ENCODE measurements at regions of chr7 and their contacts with region 1.

Region 1: GRCh38 chr7:128387216-128388144 is 22.3 kb downstream of the IMPDH1 start:
- DNase-seq: no peak
- ATAC-seq: peak; percentile 93
- H3K4me3 ChIP-seq: no peak overlapping the region
- H3K27ac ChIP-seq: no peak overlapping the region
- H3K4me1 ChIP-seq: no peaks in the 10 kb centered on the region
- H3K27me3 ChIP-seq: no peaks in the 10 kb centered on the region; a peak in 1 of 4 replicates
- CTCF ChIP-seq: peak; percentile 84 to 87 (median 85)
- EP300 ChIP-seq: no peak
- POLR2A ChIP-seq: no peak
- RAD21 ChIP-seq: peak; percentile 58

Region 2: GRCh38 chr7:128135515-128136214 is 251.8 kb before region 1 on chr7:
- CTCF ChIA-PET with region 1: no interaction called
- POLR2A ChIA-PET with region 1: no interaction called
- RAD21 ChIA-PET with region 1: no interaction called
- SMC1A ChIA-PET with region 1: interaction called, 3 read pairs
- in situ Hi-C with region 1: no loop called
- intact Hi-C with region 1: loop called (anchors 10 kb)
- DNase-seq: no peak
- ATAC-seq: peak; percentile 98
- H3K4me3 ChIP-seq: peak overlapping the region; percentile 61
- H3K27ac ChIP-seq: no peak overlapping the region
- H3K4me1 ChIP-seq: peaks cover 4% of the 10 kb centered on the region
- H3K27me3 ChIP-seq: peaks cover 9% of the 10 kb centered on the region in 2 experiments
- CTCF ChIP-seq: peak; percentile 72 to 89 (median 75)
- EP300 ChIP-seq: no peak
- POLR2A ChIP-seq: no peak; the same call in 1 of the 2 replicates
- RAD21 ChIP-seq: peak; percentile 69

Region 3: DNA sequence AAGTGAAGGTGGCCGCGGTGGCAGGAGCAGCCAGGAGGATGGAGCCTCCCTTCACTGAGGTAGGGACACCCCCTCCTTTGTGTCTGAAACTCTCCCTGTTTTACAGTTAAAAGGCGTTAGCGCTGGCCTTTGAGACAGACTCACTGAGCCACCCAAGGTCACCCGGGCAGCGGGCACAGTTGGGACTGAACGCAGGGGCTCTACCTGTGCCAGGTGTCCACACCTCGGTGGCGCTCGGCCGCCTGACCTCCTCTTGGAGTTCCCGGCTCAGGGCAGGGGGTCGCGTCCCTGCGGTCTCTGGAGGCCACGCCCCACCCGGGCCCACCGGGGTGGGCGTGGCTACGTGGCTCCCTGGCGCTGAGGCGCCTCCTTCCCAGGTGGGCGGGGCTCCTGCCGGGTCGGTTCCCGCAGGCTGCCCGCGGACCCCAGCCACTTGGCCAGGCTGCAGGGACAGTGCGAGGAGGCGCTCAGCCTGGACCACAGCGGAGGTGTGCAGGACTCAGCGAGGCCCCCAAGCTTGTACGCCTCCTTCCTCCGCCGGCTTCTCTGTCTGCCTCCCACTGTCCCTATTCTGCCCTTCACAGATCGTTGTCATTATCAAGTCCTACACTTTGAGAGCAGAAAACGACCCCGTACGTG is 186.3 kb before region 1 on chr7:
- CTCF ChIA-PET with region 1: no interaction called
- POLR2A ChIA-PET with region 1: no interaction called
- RAD21 ChIA-PET with region 1: no interaction called
- SMC1A ChIA-PET with region 1: no interaction called
- in situ Hi-C with region 1: no loop called
- intact Hi-C with region 1: no loop called
- DNase-seq: no peak
- ATAC-seq: no peak
- H3K4me3 ChIP-seq: no peak overlapping the region
- H3K27ac ChIP-seq: no peak overlapping the region
- H3K4me1 ChIP-seq: no peaks in the 10 kb centered on the region
- H3K27me3 ChIP-seq: peaks cover 3 to 15% of the 10 kb centered on the region in 2 experiments
- CTCF ChIP-seq: no peak
- EP300 ChIP-seq: no peak
- POLR2A ChIP-seq: no peak
- RAD21 ChIP-seq: no peak

Region 4: GRCh38 chr7:128343554-128344430 is 43.7 kb before region 1 on chr7 and contains the start of gene RBM28:
- CTCF ChIA-PET with region 1: interaction called, 106 read pairs
- POLR2A ChIA-PET with region 1: no interaction called
- RAD21 ChIA-PET with region 1: interaction called, 24 read pairs
- SMC1A ChIA-PET with region 1: interaction called, 19 read pairs
- in situ Hi-C with region 1: no loop called
- intact Hi-C with region 1: loop called (anchors 1 kb)
- DNase-seq: peak; percentile 73
- ATAC-seq: peak; percentile 96
- H3K4me3 ChIP-seq: peak within 1 kb of the TSS; percentile 81
- H3K27ac ChIP-seq: peak within 1 kb of the TSS; percentile 51
- H3K4me1 ChIP-seq: peaks cover 9% of the 10 kb centered on the region
- H3K27me3 ChIP-seq: 0 out of 4 replicates have a peak, but pooled peaks cover 0 to under 1% of the 10 kb centered on the region in 2 experiments
- CTCF ChIP-seq: no peak
- EP300 ChIP-seq: no peak
- POLR2A ChIP-seq: peak; percentile 94
- RAD21 ChIP-seq: no peak
- polyA plus RNA-seq, gene RBM28: 17.9 to 29.6 TPM

Region 5: DNA sequence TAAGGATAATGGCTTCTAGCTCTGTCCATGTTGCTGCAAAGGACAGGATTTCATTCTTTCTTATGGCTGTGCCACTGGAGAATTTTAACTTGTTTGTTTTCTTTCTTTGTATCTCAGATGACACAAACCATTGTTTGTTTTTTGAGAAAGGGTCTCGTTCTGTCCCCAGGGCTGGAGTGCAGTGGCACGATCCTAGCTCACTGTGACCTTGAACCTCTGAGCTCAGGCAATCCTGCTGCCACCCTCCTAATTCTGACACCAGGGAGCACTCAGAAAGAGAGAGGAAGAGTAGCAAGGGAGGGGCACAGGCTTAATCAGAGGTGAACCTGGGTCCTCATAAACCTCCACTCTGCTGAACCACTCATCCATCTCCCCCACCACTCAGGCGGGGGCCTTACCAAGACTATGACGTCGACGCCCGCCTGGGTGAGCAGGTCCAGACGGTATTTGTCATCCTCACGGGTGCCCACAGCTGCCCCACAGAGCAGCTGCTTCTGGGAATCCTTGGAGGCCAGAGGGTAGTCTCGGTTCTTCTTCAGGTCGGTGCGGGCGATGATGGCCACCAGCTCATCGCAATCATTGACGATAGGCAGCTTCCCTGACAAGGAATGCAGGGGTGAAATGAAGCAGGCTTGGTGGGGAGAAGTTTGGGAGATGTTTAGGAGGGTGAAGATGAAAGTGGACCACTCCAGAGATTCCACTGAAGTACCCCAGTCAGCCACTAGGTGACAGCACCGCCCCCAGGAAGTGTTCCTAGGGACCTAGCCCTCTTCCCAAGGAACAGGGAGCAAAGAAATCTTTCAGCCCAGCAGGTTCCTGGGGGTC is 10.7 kb after region 1 on chr7:
- CTCF ChIA-PET with region 1: interaction called, 34 read pairs
- POLR2A ChIA-PET with region 1: no interaction called
- RAD21 ChIA-PET with region 1: no interaction called
- SMC1A ChIA-PET with region 1: interaction called, 4 read pairs
- in situ Hi-C with region 1: no loop called
- intact Hi-C with region 1: no loop called
- DNase-seq: no peak
- ATAC-seq: peak; percentile 73
- H3K4me3 ChIP-seq: no peak overlapping the region
- H3K27ac ChIP-seq: no peak overlapping the region
- H3K4me1 ChIP-seq: no peaks in the 10 kb centered on the region
- H3K27me3 ChIP-seq: no peaks in the 10 kb centered on the region
- CTCF ChIP-seq: peak; percentile 90 to 99 (median 91)
- EP300 ChIP-seq: no peak
- POLR2A ChIP-seq: no peak
- RAD21 ChIP-seq: peak; percentile 64

Region 6: GRCh38 chr7:128409596-128410160 is 22.2 kb after region 1 on chr7 and contains the start of gene IMPDH1:
- CTCF ChIA-PET with region 1: interaction called, 16 read pairs
- POLR2A ChIA-PET with region 1: no interaction called
- RAD21 ChIA-PET with region 1: interaction called, 3 read pairs
- SMC1A ChIA-PET with region 1: interaction called, 3 read pairs
- in situ Hi-C with region 1: no loop called
- intact Hi-C with region 1: no loop called
- DNase-seq: no peak
- ATAC-seq: peak; percentile 90
- H3K4me3 ChIP-seq: peak within 1 kb of the TSS; percentile 90
- H3K27ac ChIP-seq: no peak within 1 kb of the TSS
- H3K4me1 ChIP-seq: peaks cover 8% of the 10 kb centered on the region
- H3K27me3 ChIP-seq: no peaks in the 10 kb centered on the region; a peak in 1 of 4 replicates
- CTCF ChIP-seq: no peak
- EP300 ChIP-seq: no peak
- POLR2A ChIP-seq: peak; percentile 68
- RAD21 ChIP-seq: no peak
- polyA plus RNA-seq, gene IMPDH1: 0.50 to 1.5 TPM

Region 7: DNA sequence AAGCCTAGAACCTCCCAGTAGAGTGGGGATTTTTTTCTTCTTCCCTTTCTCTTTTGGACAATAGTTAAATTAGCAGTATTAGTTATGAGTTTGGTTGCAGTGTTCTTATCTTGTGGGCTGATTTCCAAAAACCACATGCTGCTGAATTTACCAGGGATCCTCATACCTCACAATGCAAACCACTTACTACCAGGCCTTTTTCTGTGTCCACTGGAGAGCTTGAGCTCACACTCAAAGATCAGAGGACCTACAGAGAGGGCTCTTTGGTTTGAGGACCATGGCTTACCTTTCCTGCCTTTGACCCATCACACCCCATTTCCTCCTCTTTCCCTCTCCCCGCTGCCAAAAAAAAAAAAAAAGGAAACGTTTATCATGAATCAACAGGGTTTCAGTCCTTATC is 382.8 kb after region 1 on chr7:
- CTCF ChIA-PET with region 1: no interaction called
- POLR2A ChIA-PET with region 1: no interaction called
- RAD21 ChIA-PET with region 1: no interaction called
- SMC1A ChIA-PET with region 1: no interaction called
- in situ Hi-C with region 1: no loop called
- intact Hi-C with region 1: no loop called
- DNase-seq: no peak
- ATAC-seq: no peak
- H3K4me3 ChIP-seq: no peak overlapping the region
- H3K27ac ChIP-seq: no peak overlapping the region
- H3K4me1 ChIP-seq: no peaks in the 10 kb centered on the region
- H3K27me3 ChIP-seq: no peaks in the 10 kb centered on the region
- CTCF ChIP-seq: no peak
- EP300 ChIP-seq: no peak
- POLR2A ChIP-seq: no peak
- RAD21 ChIP-seq: no peak